ENCODE measurements at regions of chr14 and their contacts with region 1.

Region 1: GRCh38 chr14:61837336-61838229 is 75.4 kb downstream of the SNAPC1 start:
- DNase-seq: peak; percentile 87
- ATAC-seq: peak; percentile 99
- H3K4me3 Mint-ChIP-seq: no peak overlapping the region
- H3K27ac Mint-ChIP-seq: no peak overlapping the region
- H3K4me1 Mint-ChIP-seq: peaks cover 4% of the 10 kb centered on the region
- H3K27me3 Mint-ChIP-seq: peaks cover 3% of the 10 kb centered on the region
- CTCF ChIP-seq: peak; percentile 98

Region 2: GRCh38 chr14:61296719-61297502 is 540.7 kb before region 1 on chr14:
- CTCF ChIA-PET with region 1: interaction called, 20 read pairs
- POLR2A ChIA-PET with region 1: no interaction called
- intact Hi-C with region 1: loop called (anchors 10 kb)
- DNase-seq: no peak
- ATAC-seq: peak; percentile 64
- H3K4me3 Mint-ChIP-seq: peak overlapping the region; percentile 56
- H3K27ac Mint-ChIP-seq: peak overlapping the region; percentile 79
- H3K4me1 Mint-ChIP-seq: peaks cover 53% of the 10 kb centered on the region
- H3K27me3 Mint-ChIP-seq: no peaks in the 10 kb centered on the region
- CTCF ChIP-seq: peak; percentile 81

Region 3: GRCh38 chr14:61493239-61493638 is 344.3 kb before region 1 on chr14:
- CTCF ChIA-PET with region 1: interaction called, 13 read pairs
- POLR2A ChIA-PET with region 1: no interaction called
- intact Hi-C with region 1: no loop called
- DNase-seq: no peak
- ATAC-seq: no peak
- H3K4me3 Mint-ChIP-seq: no peak overlapping the region
- H3K27ac Mint-ChIP-seq: no peak overlapping the region
- H3K4me1 Mint-ChIP-seq: peaks cover 53% of the 10 kb centered on the region
- H3K27me3 Mint-ChIP-seq: no peaks in the 10 kb centered on the region
- CTCF ChIP-seq: no peak

Region 4: DNA sequence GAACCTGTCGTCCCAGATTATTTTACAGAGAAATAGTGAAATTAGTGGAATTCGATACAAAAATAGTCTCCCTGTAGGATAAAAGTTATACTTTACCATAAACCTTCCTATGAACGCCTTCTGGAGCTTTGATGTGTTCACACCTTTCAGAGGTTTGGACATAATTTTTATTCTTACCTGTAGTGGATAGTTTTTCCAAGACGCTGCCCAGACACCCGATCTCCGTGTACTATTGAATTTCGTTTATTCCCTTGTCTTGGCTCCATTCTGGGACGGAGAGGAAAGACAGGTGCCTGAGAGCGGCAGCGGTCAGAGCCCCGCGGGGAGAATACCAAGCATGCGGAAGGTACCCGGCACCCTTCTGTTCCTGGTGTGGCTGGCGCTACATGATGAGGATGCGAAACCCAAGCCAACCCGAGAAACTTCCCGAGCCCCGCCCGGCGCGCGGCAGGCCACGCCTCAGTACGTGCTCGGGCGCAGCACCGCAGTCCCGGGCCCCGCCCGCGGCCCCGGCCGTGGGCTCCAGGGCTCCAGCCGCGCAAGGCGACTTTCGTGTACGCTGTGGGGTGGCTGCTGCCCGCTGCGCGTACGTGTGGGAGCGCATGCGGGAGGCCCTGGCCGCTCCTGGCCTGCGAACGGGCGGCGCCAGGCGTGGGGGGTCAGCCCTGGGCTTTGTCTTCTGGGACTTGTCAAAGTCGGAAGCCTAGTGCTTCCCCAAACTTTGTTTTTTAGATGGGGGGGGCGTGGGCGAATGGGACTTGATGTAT is 86.7 kb before region 1 on chr14:
- CTCF ChIA-PET with region 1: interaction called, 17 read pairs
- POLR2A ChIA-PET with region 1: no interaction called
- intact Hi-C with region 1: no loop called
- DNase-seq: peak; percentile 91
- ATAC-seq: peak; percentile 93
- H3K4me3 Mint-ChIP-seq: peak overlapping the region; percentile 93
- H3K27ac Mint-ChIP-seq: peak overlapping the region; percentile 90
- H3K4me1 Mint-ChIP-seq: peaks cover 33% of the 10 kb centered on the region
- H3K27me3 Mint-ChIP-seq: no peaks in the 10 kb centered on the region
- CTCF ChIP-seq: no peak

Region 5: GRCh38 chr14:61847861-61848260 is 10.3 kb after region 1 on chr14:
- CTCF ChIA-PET with region 1: interaction called, 15 read pairs
- POLR2A ChIA-PET with region 1: no interaction called
- intact Hi-C with region 1: no loop called
- DNase-seq: no peak
- ATAC-seq: no peak
- H3K4me3 Mint-ChIP-seq: no peak overlapping the region
- H3K27ac Mint-ChIP-seq: no peak overlapping the region
- H3K4me1 Mint-ChIP-seq: no peaks in the 10 kb centered on the region
- H3K27me3 Mint-ChIP-seq: peaks cover 15% of the 10 kb centered on the region
- CTCF ChIP-seq: no peak

Measured in activated CD8-positive, alpha-beta T cell treated with anti-CD3 and anti-CD28 coated beads for 36 hours (primary cell).